ENCODE measurements at regions of chr7 and their contacts with region 1.

Region 1: DNA sequence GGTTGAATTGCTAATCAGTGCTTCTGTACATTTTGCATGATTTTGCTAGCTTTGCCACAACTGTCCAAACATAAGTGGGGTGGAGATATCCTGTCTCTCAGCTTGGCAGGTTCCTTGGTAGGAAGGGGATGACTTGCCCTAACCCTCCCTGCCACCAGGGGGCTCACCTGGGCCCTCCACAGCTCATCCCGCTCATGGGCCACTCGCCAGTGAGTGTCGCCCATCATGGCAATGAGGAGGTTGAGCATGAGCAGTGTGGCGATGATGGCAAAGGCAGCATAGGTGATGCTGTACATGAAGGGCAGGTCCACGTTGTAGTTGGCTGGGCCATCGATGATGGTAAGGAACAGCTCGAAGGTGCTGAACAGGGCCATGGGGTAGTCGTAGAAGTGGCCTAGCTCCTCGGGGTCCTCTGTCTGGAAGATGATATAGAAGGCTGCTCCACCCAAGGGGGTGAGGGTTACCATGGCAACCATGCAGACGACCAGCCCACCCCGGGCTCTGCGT is 12.2 kb downstream of the TRPV6 start:
- DNase-seq: peak; percentile 48
- H3K4me3 ChIP-seq: no peak overlapping the region
- H3K27ac ChIP-seq: no peak overlapping the region
- H3K4me1 ChIP-seq: no peaks in the 10 kb centered on the region
- H3K27me3 ChIP-seq: no peaks in the 10 kb centered on the region
- CTCF ChIP-seq: peak; percentile 69

Region 2: GRCh38 chr7:142919656-142920055 is 46.3 kb after region 1 on chr7:
- CTCF ChIA-PET with region 1: no interaction called
- POLR2A ChIA-PET with region 1: no interaction called
- intact Hi-C with region 1: loop called (anchors 5 kb)
- DNase-seq: no peak
- H3K4me3 ChIP-seq: no peak overlapping the region
- H3K27ac ChIP-seq: no peak overlapping the region
- H3K4me1 ChIP-seq: no peaks in the 10 kb centered on the region
- H3K27me3 ChIP-seq: peaks cover 26% of the 10 kb centered on the region
- CTCF ChIP-seq: no peak

Region 3: GRCh38 chr7:142974626-142975025 is 101.3 kb after region 1 on chr7:
- CTCF ChIA-PET with region 1: no interaction called
- POLR2A ChIA-PET with region 1: no interaction called
- intact Hi-C with region 1: no loop called
- DNase-seq: no peak
- H3K4me3 ChIP-seq: no peak overlapping the region
- H3K27ac ChIP-seq: no peak overlapping the region
- H3K4me1 ChIP-seq: no peaks in the 10 kb centered on the region
- H3K27me3 ChIP-seq: peaks cover 4% of the 10 kb centered on the region
- CTCF ChIP-seq: no peak

Measured in A673 (cell line).